K562 (cell line): ENCODE measurements at regions of chr3 and their contacts with region 1.

Region 1: DNA sequence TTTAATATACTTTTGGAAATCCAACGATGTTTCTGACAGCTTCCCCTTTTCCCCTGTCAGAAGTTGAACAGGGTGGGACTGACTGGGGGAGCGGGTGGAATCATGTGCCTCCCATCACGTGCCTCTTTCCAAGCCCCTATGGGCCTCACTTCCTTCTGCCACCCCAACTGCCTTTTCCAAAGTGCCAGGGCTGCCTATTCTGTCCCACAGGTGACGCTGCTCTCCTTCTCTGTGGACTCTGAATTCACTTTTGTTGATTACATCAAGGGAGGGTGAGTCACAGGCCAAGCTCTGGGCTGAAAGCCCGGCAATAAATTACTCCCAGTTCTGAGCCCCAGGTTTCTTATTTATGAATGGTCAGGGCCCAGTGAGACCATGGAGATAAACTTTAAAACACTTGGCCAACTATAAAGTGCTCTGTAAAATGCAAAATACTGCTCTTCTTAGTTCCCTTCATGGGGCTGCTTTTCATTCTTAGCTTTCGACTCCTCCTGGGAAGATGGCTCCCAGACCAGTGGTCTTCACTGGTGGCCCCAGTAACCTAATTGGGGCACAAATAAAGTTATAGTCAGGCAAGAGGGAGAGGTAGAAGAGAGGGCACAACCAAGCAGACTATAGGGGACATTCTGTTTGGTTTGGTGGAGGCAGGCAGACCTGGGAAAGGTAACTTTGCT is 12.3 kb downstream of the CPNE9 start:
- DNase-seq: peak; percentile 82 to 94 (median 87)
- ATAC-seq: peak; percentile 99
- H3K4me3 ChIP-seq: no peak overlapping the region
- H3K27ac ChIP-seq: peak overlapping the region; percentile 62; the same call in 2 of the 3 replicates
- H3K4me1 ChIP-seq: peaks cover 5 to 10% of the 10 kb centered on the region in 2 experiments; a peak in 4 of 5 replicates
- H3K27me3 ChIP-seq: peaks cover 33 to 38% of the 10 kb centered on the region in 2 experiments
- CTCF ChIP-seq: peak; percentile 93 to 99 (median 99)
- EP300 ChIP-seq: peak; percentile 79
- POLR2A ChIP-seq: no peak
- RAD21 ChIP-seq: peak; percentile 99

Region 2: DNA sequence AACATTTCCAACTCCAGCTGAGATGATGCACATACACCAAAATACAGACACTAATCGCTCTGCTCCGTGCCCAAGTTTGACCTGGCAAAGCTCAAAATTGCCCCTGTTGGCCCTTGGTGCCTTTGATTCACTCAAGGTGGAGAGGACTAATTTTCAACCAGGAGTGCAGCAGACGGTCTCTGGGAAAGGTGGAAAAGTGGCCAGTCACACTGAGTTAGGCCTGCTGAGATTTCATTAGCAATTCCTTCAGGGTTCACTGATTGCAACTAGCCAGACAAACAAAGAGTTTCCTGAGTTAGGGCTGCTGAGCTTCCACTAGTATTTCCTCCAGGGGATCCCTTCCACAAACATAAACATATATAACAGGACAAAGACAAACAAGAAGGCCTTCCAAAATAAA is 133.6 kb before region 1 on chr3:
- CTCF ChIA-PET with region 1: no interaction called
- POLR2A ChIA-PET with region 1: no interaction called
- in situ Hi-C with region 1: no loop called
- intact Hi-C with region 1: loop called (anchors 10 kb)
- DNase-seq: no peak
- ATAC-seq: no peak
- H3K4me3 ChIP-seq: no peak overlapping the region
- H3K27ac ChIP-seq: no peak overlapping the region
- H3K4me1 ChIP-seq: no peaks in the 10 kb centered on the region
- H3K27me3 ChIP-seq: peaks cover 4 to 29% of the 10 kb centered on the region in 2 experiments
- CTCF ChIP-seq: no peak
- EP300 ChIP-seq: no peak
- POLR2A ChIP-seq: no peak
- RAD21 ChIP-seq: no peak

Region 3: GRCh38 chr3:9843715-9844438 is 128.0 kb after region 1 on chr3 and contains the start of gene RPUSD3:
- CTCF ChIA-PET with region 1: no interaction called
- POLR2A ChIA-PET with region 1: no interaction called
- in situ Hi-C with region 1: no loop called
- intact Hi-C with region 1: loop called (anchors 5 kb)
- DNase-seq: peak; percentile 99 to 100 (median 100)
- ATAC-seq: peak; percentile 99
- H3K4me3 ChIP-seq: peak within 1 kb of the TSS; percentile 72
- H3K27ac ChIP-seq: peak within 1 kb of the TSS; percentile 73
- H3K4me1 ChIP-seq: peaks cover 7 to 22% of the 10 kb centered on the region in 2 experiments; a peak in 2 of 5 replicates
- H3K27me3 ChIP-seq: no peaks in the 10 kb centered on the region
- CTCF ChIP-seq: no peak
- EP300 ChIP-seq: no peak; the same call in 1 of the 2 replicates
- POLR2A ChIP-seq: peak; percentile 94
- RAD21 ChIP-seq: no peak
- polyA plus RNA-seq, gene RPUSD3: 13.8 to 26.4 TPM